Mammary epithelial cell (primary cell): ENCODE measurements at regions of chr16 and their contacts with region 1.

Region 1: DNA sequence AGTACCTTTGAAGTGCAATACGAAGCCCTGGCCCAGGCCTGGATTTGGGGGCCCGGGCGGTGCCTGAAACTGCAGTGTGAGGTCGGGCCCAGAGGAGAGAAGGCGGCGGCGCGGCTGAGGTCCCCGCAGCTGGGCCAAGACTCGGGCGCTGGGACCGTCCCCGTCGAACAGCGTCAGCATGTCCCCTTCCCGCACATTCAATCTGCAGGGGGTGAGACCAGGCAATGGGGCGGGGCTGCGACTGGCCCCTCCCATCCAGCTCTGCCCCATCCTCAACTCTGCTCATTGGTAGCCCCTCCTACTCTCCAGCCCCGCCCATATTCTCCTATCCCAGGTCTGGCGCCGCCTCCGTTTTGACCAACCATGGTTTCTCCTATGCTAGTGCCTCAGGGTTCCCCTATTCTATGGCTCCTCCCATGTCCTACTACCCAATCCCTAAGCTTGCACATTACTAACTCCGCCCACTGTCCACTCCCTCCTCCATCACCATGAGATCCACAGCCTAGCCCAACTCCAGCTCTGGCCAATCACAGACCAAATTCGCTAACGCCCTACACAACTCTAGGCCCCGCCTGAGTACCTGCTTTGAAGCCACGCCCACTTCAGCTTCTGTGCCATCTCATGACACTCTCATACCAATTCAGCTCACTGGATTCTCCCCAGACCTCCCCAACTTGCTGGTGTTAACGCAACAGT is 14.4 kb upstream of the CDIPT start:
- DNase-seq: peak; percentile 41
- H3K4me3 ChIP-seq: no peak overlapping the region
- H3K27ac ChIP-seq: no peak overlapping the region
- H3K4me1 ChIP-seq: no peaks in the 10 kb centered on the region
- H3K27me3 ChIP-seq: peaks cover 9% of the 10 kb centered on the region
- CTCF ChIP-seq: no peak

Region 2: DNA sequence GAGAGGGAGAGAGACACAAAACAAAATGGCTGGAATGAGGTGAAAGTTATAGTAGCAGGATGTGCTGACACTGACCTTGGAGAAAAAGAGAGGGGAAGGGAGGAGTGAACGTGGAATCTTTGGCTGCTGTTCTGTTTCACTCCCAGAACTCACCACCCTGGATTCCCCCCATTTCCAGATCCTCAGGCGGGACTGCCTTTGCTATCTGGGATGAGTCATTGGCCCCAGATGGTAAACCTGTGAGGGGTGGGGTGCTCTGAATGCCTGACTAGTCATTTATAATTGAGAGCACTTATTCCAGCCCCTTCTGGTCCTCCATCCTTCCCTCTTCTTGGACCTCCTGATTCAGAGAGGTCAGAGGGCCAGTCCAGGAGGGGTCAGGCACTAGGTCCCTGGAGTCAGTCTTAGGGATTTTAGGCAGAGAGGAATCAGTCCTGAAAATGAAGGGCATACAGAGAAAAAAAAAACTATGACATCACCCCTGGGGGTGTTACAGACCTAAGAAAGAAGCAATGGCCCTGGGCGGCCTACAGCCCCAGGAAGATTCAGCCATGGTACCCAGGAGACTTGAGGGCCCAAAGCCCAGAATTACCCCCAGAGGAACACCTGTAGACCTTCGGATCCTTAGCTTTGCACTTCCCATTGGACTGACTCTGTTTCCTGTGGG is 101.5 kb before region 1 on chr16:
- CTCF ChIA-PET with region 1: no interaction called
- dilution Hi-C with region 1: no loop called
- in situ Hi-C with region 1: no loop called
- intact Hi-C with region 1: no loop called
- DNase-seq: peak; percentile 70
- H3K4me3 ChIP-seq: no peak overlapping the region
- H3K27ac ChIP-seq: no peak overlapping the region
- H3K4me1 ChIP-seq: peaks cover 12% of the 10 kb centered on the region
- H3K27me3 ChIP-seq: no peaks in the 10 kb centered on the region
- CTCF ChIP-seq: no peak

Region 3: GRCh38 chr16:29839822-29840221 is 37.6 kb before region 1 on chr16:
- CTCF ChIA-PET with region 1: no interaction called
- dilution Hi-C with region 1: loop called (anchors 5 kb)
- in situ Hi-C with region 1: no loop called
- intact Hi-C with region 1: no loop called
- DNase-seq: no peak
- H3K4me3 ChIP-seq: no peak overlapping the region
- H3K27ac ChIP-seq: no peak overlapping the region
- H3K4me1 ChIP-seq: no peaks in the 10 kb centered on the region
- H3K27me3 ChIP-seq: no peaks in the 10 kb centered on the region
- CTCF ChIP-seq: no peak

Region 4: DNA sequence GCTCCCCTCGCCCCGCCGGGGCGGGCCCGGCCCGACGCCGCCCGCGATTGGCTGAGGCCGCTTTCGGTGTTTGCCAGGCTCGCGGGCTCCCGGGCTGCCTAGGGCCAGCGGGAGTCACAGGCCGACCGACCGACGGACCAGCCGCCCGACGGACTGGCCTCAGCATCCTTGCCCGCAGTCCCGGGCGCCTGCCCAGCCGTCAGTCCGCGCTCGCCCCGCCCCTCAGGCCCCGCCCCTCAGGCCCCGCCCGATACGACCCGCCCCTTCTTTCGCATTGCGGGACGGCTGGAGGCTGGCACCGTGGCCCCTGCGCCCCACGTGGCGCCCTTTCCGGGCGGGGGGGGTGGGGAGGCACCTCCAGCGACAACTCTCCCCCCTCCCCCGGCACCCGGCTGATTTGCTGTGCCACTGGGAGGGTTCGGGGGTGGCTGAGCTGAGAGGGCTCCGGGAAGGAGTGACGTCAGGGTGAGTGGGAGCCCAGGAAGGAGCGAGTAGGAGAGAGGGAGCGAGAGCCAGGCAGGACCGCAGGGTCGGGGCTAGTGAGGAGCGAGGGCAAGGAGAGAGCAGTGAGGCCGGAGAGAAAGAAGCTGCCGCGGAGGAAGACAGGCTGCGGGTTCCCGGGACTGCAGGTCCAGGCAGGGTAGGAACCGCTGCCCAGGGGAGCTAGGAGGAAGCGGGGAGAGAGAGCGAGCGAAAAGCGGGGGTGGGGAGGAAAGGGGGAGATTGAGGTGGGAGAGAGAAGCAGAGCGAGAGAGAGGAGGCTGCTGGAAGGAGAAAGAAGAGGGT is 22.9 kb after region 1 on chr16 and contains the start of gene ASPHD1:
- CTCF ChIA-PET with region 1: no interaction called
- dilution Hi-C with region 1: no loop called
- in situ Hi-C with region 1: no loop called
- intact Hi-C with region 1: no loop called
- DNase-seq: peak; percentile 84
- H3K4me3 ChIP-seq: peak within 1 kb of the TSS; percentile 61 to 70 (median 68)
- H3K27ac ChIP-seq: no peak within 1 kb of the TSS
- H3K4me1 ChIP-seq: peaks cover 21% of the 10 kb centered on the region
- H3K27me3 ChIP-seq: peaks cover 4% of the 10 kb centered on the region
- CTCF ChIP-seq: no peak
- total RNA-seq, gene ASPHD1: 1.5 to 14.7 TPM